Colonic mucosa (tissue), 4 donors: ENCODE measurements at regions of chr21 and their contacts with region 1.

Region 1: DNA sequence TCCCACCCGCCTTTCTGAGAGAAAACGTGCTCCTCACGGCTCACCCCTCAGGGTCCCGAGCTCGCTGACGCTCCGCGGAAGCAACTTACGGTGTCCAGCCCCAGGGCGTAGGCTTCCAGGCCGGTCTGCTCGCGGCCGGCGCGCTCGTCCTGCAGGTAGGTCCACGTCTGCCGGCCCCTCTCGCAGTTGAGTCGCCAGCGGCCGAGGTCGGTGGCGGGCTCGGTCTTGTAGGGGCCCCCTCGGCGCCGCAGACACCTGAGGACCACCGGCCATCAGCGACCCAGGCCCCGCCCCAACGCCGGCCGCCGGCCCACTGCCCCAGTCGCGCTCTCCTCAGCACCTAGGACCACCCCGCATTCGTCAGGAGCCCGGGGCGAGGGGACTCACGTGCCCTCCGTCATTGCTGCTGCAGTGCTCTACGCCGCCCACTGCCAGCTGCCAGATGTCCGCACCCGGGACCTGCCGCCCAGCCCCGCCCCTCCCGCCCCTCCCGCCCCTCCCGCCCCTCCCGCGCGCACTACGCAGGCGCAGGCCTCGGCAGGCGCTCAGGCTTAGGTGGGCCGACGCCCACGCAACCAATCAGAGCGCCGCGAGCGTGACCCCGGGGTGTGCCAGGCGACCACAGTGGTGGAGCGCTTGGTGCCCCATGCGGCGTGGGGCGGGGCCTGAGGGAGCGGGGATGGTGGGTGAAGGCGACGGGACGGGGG is at the start of gene LSS:
- DNase-seq: peak; percentile 99
- H3K4me3 ChIP-seq: peak within 1 kb of the TSS; percentile 96
- H3K27ac ChIP-seq: peak within 1 kb of the TSS; percentile 73
- H3K4me1 ChIP-seq: peaks cover 3% of the 10 kb centered on the region
- H3K27me3 ChIP-seq: no peaks in the 10 kb centered on the region
- CTCF ChIP-seq: no peak
- total RNA-seq, gene LSS: 78.2 to 142 TPM

Region 2: GRCh38 chr21:46184625-46185555 is 43.6 kb before region 1 on chr21:
- intact Hi-C with region 1: loop called (anchors 5 kb)
- DNase-seq: peak; percentile 72
- H3K4me3 ChIP-seq: peak overlapping the region; percentile 58
- H3K27ac ChIP-seq: peak overlapping the region; percentile 69
- H3K4me1 ChIP-seq: no peaks in the 10 kb centered on the region
- H3K27me3 ChIP-seq: no peaks in the 10 kb centered on the region
- CTCF ChIP-seq: no peak

Region 3: GRCh38 chr21:46323227-46324128 is 95.0 kb after region 1 on chr21 and contains the start of gene C21orf58:
- intact Hi-C with region 1: loop called (anchors 10 kb)
- DNase-seq: peak; percentile 96
- H3K4me3 ChIP-seq: peak within 1 kb of the TSS; percentile 74
- H3K27ac ChIP-seq: peak within 1 kb of the TSS; percentile 98
- H3K4me1 ChIP-seq: no peaks in the 10 kb centered on the region
- H3K27me3 ChIP-seq: no peaks in the 10 kb centered on the region
- CTCF ChIP-seq: no peak
- total RNA-seq, gene C21orf58: 5.5 to 25.7 TPM